ENCODE measurements at regions of chr3 and their contacts with region 1.

Region 1: DNA sequence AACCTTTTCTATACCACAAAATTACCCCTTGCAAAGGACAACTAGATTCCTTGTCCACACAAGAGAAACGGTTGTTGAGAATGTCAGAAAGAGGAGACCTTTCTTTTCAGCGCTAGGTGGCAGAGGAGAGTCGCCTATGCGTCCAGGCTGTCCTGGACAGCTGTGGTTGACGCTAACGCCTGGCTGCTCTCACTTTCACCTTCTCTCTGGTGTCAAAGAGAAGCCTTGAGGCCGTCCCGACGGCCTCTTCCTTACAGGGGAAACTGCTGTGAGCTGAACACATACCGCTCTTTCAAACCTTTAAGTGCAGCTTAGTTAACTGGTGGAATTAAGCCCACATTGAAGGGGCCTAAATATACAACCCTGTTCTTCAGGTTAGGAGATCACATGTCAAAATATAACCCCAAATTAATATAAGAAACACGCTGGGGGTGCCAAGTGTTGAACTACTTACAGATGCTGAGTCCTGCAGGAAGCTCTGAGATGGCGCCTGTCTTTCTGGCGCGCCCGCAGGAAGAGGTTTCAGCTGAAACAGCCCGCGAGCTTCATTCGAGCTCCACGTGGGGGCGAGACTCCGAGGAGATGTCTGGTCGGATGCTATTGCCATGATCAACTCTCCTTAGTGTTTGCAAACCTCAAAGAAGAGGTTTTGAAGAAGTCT is 26.1 kb upstream of the KBTBD8 start:
- DNase-seq: peak; percentile 24 to 59 (median 48)
- ATAC-seq: peak; percentile 93
- H3K4me3 ChIP-seq: peak overlapping the region; percentile 69
- H3K4me3 Mint-ChIP-seq: peak overlapping the region; percentile 75 to 94 (median 88)
- H3K27ac ChIP-seq: peak overlapping the region; percentile 54
- H3K27ac Mint-ChIP-seq: peak overlapping the region; percentile 24 to 95 (median 68)
- H3K4me1 ChIP-seq: peaks cover 5 to 7% of the 10 kb centered on the region in 2 donors
- H3K4me1 Mint-ChIP-seq: peaks cover 0 to 20% (median 12%) of the 10 kb centered on the region in 7 donors
- H3K27me3 ChIP-seq: no peaks in the 10 kb centered on the region
- H3K27me3 Mint-ChIP-seq: peaks cover 0 to 10% (median 0%) of the 10 kb centered on the region in 5 donors

Region 2: GRCh38 chr3:66989860-66990665 is 18.0 kb after region 1 on chr3:
- CTCF ChIA-PET with region 1: interaction called, 22 read pairs
- POLR2A ChIA-PET with region 1: no interaction called
- intact Hi-C with region 1: loop called in 1 of 2 experiments (anchors 1 kb)
- DNase-seq: no peak
- ATAC-seq: peak; percentile 40
- H3K4me3 ChIP-seq: no peak overlapping the region
- H3K4me3 Mint-ChIP-seq: no peak overlapping the region
- H3K27ac ChIP-seq: no peak overlapping the region
- H3K27ac Mint-ChIP-seq: no peak overlapping the region
- H3K4me1 ChIP-seq: no peaks in the 10 kb centered on the region
- H3K4me1 Mint-ChIP-seq: no peaks in the 10 kb centered on the region
- H3K27me3 ChIP-seq: no peaks in the 10 kb centered on the region
- H3K27me3 Mint-ChIP-seq: peaks cover 14 to 26% (median 25%) of the 10 kb centered on the region in 5 donors

Region 3: DNA sequence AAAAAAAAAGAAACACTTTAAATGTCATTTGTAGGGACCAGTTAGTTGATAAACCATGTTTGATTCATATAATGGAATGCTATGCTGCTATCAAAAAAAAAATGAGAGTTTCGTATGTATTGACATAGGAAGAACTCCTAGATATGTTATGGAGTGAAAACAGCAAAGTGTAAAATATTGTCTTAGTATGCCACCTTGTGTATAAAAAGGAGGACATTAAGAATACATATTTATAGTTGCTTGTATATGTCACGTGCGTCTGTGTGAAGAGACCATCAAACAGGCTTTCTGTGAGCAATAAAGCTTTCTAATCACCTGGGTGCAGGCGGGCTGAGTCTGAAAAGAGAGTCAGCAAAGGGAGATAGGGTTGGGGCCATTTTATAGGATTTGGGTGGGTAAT is 65.6 kb after region 1 on chr3:
- CTCF ChIA-PET with region 1: interaction called, 8 read pairs
- POLR2A ChIA-PET with region 1: interaction called, 3 read pairs
- intact Hi-C with region 1: loop called (anchors 1 to 5 kb)
- DNase-seq: peak in 2 of 9 donors; percentile 1 to 11
- ATAC-seq: no peak
- H3K4me3 ChIP-seq: no peak overlapping the region
- H3K4me3 Mint-ChIP-seq: no peak overlapping the region
- H3K27ac ChIP-seq: no peak overlapping the region
- H3K27ac Mint-ChIP-seq: no peak overlapping the region
- H3K4me1 ChIP-seq: no peaks in the 10 kb centered on the region
- H3K4me1 Mint-ChIP-seq: no peaks in the 10 kb centered on the region
- H3K27me3 ChIP-seq: no peaks in the 10 kb centered on the region
- H3K27me3 Mint-ChIP-seq: no peaks in the 10 kb centered on the region

Region 4: DNA sequence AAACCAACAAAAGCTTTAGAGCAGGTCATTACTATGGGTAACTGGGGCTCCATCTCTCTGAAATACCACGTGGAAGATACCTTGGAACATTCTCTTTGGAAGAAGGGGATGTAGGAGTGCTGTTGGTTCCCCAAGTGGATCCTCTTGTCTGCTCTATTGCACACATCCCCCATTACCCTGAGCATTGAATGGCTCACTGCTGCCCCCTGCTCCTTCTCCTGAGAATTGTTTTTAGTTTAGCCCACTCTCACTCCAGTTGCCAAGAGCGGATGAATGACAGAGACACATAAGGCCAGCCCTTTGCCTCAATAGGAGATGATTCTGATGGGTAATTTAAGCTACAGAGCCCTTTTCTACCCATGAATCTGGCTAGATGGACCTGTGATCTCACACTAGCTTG is 818.0 kb after region 1 on chr3:
- CTCF ChIA-PET with region 1: interaction called, 9 read pairs
- POLR2A ChIA-PET with region 1: no interaction called
- intact Hi-C with region 1: loop called (anchors 2 to 5 kb)
- DNase-seq: peak; percentile 17 to 75 (median 61)
- ATAC-seq: peak; percentile 78
- H3K4me3 ChIP-seq: no peak overlapping the region
- H3K4me3 Mint-ChIP-seq: peak overlapping the region in 3 of 10 donors; percentile 3 to 19 (median 19)
- H3K27ac ChIP-seq: no peak overlapping the region
- H3K27ac Mint-ChIP-seq: peak overlapping the region in 1 of 9 donors; percentile 3
- H3K4me1 ChIP-seq: peaks cover 0 to 9% of the 10 kb centered on the region in 2 donors
- H3K4me1 Mint-ChIP-seq: peaks cover 6 to 23% (median 15%) of the 10 kb centered on the region in 7 donors
- H3K27me3 ChIP-seq: no peaks in the 10 kb centered on the region
- H3K27me3 Mint-ChIP-seq: peaks cover 0 to 7% (median 0%) of the 10 kb centered on the region in 5 donors

Region 5: DNA sequence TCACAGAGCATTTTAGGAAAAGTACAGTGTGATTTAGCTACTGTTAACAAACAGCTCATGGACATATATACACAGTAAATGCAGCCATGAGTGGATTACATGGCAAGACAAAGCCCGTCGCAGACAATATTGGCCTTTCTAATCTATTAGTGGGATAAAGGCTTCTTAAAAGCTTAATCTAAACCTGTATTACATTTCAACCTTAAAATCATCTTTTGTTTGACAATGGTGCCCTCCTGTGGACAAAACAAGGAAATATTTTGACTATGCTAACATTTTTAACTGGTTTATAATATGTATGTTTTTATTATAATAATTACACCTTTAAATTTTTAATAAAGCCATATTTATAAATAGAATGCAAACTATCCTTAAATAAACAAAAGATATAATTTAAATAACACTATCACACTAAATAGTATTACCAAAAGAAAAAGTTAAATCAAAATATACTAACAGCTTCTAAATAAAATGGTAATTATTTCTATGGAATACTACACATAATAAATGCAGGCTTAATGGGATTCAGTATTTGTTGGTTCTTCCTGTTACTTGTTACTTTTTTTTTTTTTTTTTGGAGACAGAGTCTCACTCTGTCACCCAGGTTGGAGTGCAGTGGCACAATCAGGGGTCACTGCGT is 1921.7 kb after region 1 on chr3:
- CTCF ChIA-PET with region 1: interaction called, 6 read pairs
- POLR2A ChIA-PET with region 1: no interaction called
- intact Hi-C with region 1: loop called (anchors 1 to 5 kb)
- DNase-seq: peak in 7 of 9 donors; percentile 3 to 42 (median 24)
- ATAC-seq: no peak
- H3K4me3 ChIP-seq: no peak overlapping the region
- H3K4me3 Mint-ChIP-seq: no peak overlapping the region
- H3K27ac ChIP-seq: no peak overlapping the region
- H3K27ac Mint-ChIP-seq: no peak overlapping the region
- H3K4me1 ChIP-seq: no peaks in the 10 kb centered on the region
- H3K4me1 Mint-ChIP-seq: no peaks in the 10 kb centered on the region
- H3K27me3 ChIP-seq: no peaks in the 10 kb centered on the region
- H3K27me3 Mint-ChIP-seq: peaks cover 5 to 20% (median 6%) of the 10 kb centered on the region in 5 donors